ENCODE measurements at regions of chr10 and their contacts with region 1.

Region 1: DNA sequence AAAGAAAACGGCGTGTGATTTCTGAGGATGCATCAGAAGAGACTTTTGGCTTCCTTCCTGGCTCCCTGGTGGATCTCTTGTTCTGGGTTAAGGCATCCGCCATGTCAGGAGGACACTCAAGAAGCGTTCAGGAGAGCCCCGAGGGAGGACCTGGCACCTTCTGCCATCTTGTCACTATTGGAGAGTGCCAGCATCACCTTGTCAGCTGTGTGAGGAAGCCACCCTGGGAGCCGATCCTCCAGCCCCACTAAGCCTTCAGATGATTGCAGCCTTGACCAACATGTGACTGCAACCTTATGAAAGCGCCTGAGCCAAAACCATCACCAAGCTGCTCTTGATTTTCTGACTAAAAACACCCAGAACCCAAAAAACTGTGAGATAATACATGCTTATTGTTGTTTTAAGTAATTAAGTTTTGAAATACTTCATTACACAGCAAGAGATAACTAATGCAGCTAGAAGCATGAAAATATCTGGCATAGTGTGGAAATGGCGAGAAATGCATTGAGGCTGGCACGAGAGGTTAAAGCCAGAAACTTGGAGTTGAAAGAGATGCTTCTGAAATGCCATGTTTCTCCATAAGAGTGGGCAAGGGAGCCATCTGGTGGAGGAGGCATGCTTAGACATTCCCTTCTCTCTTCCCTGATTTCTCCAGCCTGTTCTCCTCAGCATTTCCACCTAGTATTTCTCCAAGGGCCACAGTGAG is 5.4 kb upstream of the ZFYVE27 start:
- DNase-seq: peak; percentile 64
- H3K4me3 Mint-ChIP-seq: no peak overlapping the region
- H3K27ac Mint-ChIP-seq: no peak overlapping the region
- H3K4me1 Mint-ChIP-seq: no peaks in the 10 kb centered on the region
- H3K27me3 Mint-ChIP-seq: no peaks in the 10 kb centered on the region
- CTCF ChIP-seq: peak; percentile 40

Region 2: GRCh38 chr10:97676770-97677581 is 54.5 kb before region 1 on chr10:
- CTCF ChIA-PET with region 1: interaction called, 4 read pairs
- intact Hi-C with region 1: loop called (anchors 1 kb)
- DNase-seq: peak; percentile 49
- H3K4me3 Mint-ChIP-seq: no peak overlapping the region
- H3K27ac Mint-ChIP-seq: no peak overlapping the region
- H3K4me1 Mint-ChIP-seq: no peaks in the 10 kb centered on the region
- H3K27me3 Mint-ChIP-seq: no peaks in the 10 kb centered on the region
- CTCF ChIP-seq: peak; percentile 79

Region 3: DNA sequence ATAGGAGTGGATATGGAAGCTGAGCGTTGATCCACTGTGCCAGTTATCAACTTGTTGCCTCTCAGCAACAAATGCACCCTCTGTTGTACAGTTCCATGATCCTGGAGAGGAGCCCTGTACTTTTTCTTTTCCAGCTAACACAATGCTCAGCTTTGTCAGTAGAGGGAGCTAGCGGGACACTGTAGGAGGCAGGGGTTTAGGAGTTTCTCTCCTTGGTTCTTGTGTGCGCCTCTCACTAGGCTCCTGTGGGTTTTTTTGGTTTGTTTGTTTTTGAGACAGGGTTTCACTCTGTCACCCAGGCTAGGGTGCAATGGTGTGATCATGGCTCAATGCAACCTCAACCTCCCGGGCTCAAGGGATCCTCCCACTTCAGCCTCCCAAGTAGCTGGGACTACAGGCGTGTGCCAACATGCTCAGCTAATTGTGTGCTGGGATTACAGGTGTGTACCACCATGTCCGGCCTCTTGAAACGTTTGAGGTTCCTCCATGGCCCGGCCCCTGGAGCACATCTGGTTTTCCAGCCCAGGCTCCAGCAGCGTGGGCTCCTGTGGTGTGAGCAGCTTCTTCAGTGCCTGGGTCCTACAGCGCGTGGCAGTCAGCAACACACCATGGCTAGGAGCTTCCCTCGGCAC is 29.9 kb before region 1 on chr10:
- CTCF ChIA-PET with region 1: interaction called, 10 read pairs
- intact Hi-C with region 1: loop called (anchors 2 kb)
- DNase-seq: peak; percentile 58
- H3K4me3 Mint-ChIP-seq: no peak overlapping the region
- H3K27ac Mint-ChIP-seq: no peak overlapping the region
- H3K4me1 Mint-ChIP-seq: no peaks in the 10 kb centered on the region
- H3K27me3 Mint-ChIP-seq: no peaks in the 10 kb centered on the region
- CTCF ChIP-seq: no peak

Region 4: DNA sequence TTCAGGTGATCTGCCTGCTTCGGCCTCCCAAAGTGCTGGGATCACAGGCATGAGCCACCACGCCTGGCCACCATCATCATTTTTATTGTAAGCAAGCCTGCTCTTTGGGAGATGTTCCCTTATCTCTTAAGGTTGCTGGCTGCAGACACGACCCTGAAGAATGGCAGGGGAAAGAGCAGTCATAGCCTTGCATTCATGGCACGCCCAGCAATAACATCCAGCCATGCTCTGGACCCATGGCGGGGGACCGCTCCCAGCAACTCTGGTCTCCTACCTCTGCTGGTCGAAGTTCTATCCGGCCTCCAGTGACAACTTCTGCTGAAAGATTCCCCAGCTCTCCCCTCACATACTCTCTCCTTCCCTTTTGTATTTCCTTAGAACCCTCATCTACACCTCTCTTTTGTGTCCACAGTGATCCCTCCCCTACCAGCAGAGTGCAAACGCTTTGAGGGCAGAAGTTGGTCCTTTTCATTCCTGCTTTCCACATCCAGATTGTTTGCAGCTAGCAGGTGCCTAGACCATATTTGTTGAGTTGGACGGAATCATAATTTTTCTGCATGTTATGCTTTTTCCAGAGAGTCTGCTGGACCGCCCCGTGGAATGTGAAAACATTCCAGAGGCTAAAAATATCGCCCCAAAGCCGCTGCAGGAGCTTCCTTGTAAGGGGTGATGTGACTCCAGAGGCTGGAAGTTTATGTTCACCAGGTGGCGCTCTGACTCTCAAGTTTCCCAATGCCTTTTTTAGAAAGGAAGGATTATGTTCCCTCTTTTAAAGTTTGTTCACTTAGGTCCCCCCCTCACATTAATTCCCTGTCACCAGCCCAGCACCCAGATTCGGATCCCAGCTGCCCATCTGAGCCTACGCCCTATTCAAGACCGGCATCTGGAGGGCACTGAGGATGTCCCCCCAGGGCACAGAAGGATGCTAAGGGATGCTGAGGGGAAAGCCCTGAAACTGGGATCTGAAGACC is 22.2 kb before region 1 on chr10:
- CTCF ChIA-PET with region 1: interaction called, 10 read pairs
- intact Hi-C with region 1: loop called (anchors 1 kb)
- DNase-seq: peak; percentile 56
- H3K4me3 Mint-ChIP-seq: no peak overlapping the region
- H3K27ac Mint-ChIP-seq: no peak overlapping the region
- H3K4me1 Mint-ChIP-seq: peaks cover 8% of the 10 kb centered on the region
- H3K27me3 Mint-ChIP-seq: no peaks in the 10 kb centered on the region
- CTCF ChIP-seq: peak; percentile 49

Region 5: GRCh38 chr10:97771055-97771811 is 39.7 kb after region 1 on chr10:
- CTCF ChIA-PET with region 1: no interaction called
- intact Hi-C with region 1: no loop called
- DNase-seq: peak; percentile 25
- H3K4me3 Mint-ChIP-seq: peak overlapping the region; percentile 67
- H3K27ac Mint-ChIP-seq: no peak overlapping the region
- H3K4me1 Mint-ChIP-seq: peaks cover 9% of the 10 kb centered on the region
- H3K27me3 Mint-ChIP-seq: peaks cover 68% of the 10 kb centered on the region
- CTCF ChIP-seq: no peak

Region 6: DNA sequence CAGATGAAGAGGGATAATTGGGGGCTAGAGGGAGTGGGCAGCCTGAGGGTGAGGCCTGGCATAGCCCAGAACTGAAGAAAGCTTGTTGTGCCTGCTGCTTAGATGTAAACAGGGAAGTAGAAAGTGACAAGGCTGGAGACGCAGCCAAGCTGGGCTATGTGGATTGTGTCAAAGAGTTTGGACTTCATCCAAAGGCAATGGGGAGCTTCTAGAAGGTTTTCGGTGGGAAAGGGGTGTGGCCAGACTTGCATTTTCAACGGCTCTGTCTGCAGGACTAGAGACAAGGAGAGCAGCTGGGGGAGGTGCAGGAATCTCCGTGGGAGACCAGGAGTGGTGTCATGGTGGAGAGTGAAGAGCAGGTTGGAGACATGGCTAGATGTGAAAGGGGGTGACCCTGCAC is 166.9 kb after region 1 on chr10:
- CTCF ChIA-PET with region 1: no interaction called
- intact Hi-C with region 1: no loop called
- DNase-seq: no peak
- H3K4me3 Mint-ChIP-seq: no peak overlapping the region
- H3K27ac Mint-ChIP-seq: no peak overlapping the region
- H3K4me1 Mint-ChIP-seq: no peaks in the 10 kb centered on the region
- H3K27me3 Mint-ChIP-seq: no peaks in the 10 kb centered on the region
- CTCF ChIP-seq: no peak

Measured in Calu3 (cell line).